Psoas muscle (tissue), 8 donors: ENCODE measurements at regions of chr14 and their contacts with region 1.

Region 1: GRCh38 chr14:51228890-51229289 is 11.2 kb upstream of the TMX1 start:
- DNase-seq: no peak
- ATAC-seq: no peak
- H3K4me3 ChIP-seq: no peak overlapping the region
- H3K27ac ChIP-seq: no peak overlapping the region
- H3K4me1 ChIP-seq: no peaks in the 10 kb centered on the region
- H3K27me3 ChIP-seq: no peaks in the 10 kb centered on the region
- CTCF ChIP-seq: no peak

Region 2: DNA sequence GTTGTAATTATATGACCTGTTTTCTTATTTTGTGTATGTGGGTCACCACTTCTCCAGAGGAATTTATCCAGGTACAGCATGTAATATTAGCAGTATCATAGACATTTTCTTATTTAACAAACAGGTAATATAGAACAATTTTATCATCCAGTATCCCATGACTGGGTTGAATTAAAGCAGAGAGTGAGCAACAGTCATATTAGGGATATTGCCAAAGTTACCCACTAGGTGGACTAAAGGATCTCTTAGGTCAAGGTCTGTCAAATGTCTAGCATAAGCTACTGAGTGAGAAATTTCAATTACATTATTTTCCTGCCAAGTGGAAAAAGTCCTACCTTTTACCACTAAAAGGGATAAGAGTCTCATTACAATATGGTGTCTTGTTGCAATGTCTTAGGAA is 71.9 kb before region 1 on chr14:
- intact Hi-C with region 1: loop called in 1 of 2 experiments (anchors 5 kb)
- DNase-seq: no peak
- ATAC-seq: no peak
- H3K4me3 ChIP-seq: no peak overlapping the region
- H3K27ac ChIP-seq: no peak overlapping the region
- H3K4me1 ChIP-seq: no peaks in the 10 kb centered on the region
- H3K27me3 ChIP-seq: no peaks in the 10 kb centered on the region
- CTCF ChIP-seq: no peak

Region 3: DNA sequence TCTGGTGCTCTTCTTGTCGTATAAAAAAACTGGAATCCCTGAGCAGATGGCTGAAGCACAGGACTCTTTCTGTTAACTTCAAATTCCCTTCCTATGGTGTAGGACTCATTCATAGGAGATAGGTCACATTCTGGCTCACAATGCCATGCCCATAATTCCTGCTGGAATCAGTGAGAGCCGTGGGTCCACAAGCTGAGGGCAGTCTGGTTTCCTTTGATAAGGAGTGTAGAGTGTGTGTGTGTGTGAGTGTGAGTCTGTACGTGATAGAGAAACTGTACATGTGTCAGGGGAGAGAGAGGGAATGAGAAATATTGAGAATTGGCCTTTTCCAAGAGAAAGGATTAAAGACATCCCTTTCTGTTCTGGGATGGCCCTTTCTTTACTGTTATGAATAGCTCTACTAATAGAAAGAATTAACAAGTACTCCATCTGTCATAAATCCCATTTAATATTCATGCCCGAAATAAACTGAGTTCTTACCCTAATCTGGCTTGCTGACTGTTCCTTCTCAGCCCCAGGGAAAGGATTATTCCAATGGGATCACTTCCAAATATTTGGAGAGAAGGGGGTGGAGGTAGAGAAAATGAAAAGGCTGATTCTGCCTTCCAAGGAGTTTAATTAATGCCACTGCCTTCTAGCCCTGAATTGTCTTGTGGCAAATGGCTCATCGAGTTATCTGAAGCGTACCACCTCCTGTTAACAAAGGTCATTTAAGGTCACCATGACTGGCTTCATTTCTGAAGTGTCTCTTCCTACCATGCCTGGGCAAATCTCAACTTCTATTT is 90.1 kb after region 1 on chr14:
- intact Hi-C with region 1: no loop called
- DNase-seq: no peak
- ATAC-seq: peak in 1 of 4 donors; percentile 30
- H3K4me3 ChIP-seq: no peak overlapping the region
- H3K27ac ChIP-seq: no peak overlapping the region
- H3K4me1 ChIP-seq: peaks cover 10% of the 10 kb centered on the region
- H3K27me3 ChIP-seq: no peaks in the 10 kb centered on the region
- CTCF ChIP-seq: no peak